Prostate gland (tissue), 2 donors: ENCODE measurements at regions of chr10 and their contacts with region 1.

Region 1: DNA sequence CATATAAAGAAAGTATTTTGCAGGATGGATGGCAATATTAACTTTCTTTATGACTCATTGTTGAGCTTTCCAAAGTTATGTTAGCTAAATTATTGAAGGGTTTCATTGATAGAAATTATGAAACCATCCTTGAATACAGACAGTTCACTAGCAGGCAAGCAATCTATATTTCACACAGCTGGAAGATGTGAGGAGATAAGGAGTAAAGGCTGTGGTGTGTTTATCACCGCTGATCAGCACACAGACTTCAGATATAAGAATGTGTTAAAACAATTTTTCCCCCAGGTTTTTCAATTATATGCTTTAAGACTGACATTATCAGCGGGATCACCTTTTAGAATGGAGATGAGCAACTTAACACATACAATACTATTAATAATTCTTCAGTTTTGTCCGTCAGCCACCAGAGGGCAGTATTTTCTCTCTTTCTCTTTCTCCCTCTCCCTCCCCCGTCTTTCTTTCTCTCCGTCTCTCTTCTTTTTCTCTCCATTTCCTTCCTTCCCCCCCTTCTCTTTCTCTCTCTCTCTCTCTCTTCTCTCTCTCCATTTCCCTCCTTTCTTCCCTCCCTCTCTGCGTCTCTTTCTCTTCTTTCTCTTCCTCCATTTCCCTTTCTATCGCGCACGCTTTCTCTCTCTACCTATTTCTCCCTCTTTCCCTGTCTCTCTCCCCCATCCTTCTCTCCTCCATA is 62.9 kb upstream of the FAM171A1 start:
- DNase-seq: peak; percentile 40
- H3K4me3 ChIP-seq: peak overlapping the region in 1 of 2 donors; percentile 24
- H3K27ac ChIP-seq: no peak overlapping the region
- H3K4me1 ChIP-seq: no peaks in the 10 kb centered on the region
- H3K27me3 ChIP-seq: no peaks in the 10 kb centered on the region
- CTCF ChIP-seq: peak; percentile 58 to 84 (median 72)
- POLR2A ChIP-seq: no peak

Region 2: DNA sequence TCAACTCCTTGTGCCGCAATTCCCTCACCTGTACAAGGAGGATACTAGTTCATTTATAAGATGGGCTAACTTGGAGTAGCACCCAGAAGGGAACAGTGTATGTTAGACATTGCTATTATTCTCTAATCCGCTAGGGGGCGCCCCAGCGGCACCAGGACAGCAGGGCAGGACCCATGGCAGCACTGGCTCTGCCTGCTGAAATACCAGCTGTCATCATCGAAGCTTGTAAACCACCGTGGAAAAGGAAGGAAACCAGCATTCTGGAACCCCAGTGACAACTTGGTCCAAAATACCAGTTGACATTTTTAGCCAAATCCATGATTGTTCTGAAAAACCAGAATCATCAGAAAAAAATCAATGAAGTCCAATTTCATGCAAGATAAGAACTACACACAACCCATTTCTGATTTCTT is 151.3 kb after region 1 on chr10:
- intact Hi-C with region 1: loop called (anchors 10 kb)
- DNase-seq: peak; percentile 39
- H3K4me3 ChIP-seq: no peak overlapping the region
- H3K27ac ChIP-seq: no peak overlapping the region
- H3K4me1 ChIP-seq: no peaks in the 10 kb centered on the region
- H3K27me3 ChIP-seq: no peaks in the 10 kb centered on the region
- CTCF ChIP-seq: peak; percentile 46 to 72 (median 52)
- POLR2A ChIP-seq: no peak